ENCODE measurements at regions of chr6 and their contacts with region 1.

Region 1: GRCh38 chr6:161101517-161101916 is 109.9 kb downstream of the MAP3K4 start:
- DNase-seq: no peak
- ATAC-seq: peak; percentile 59; the same call in 1 of the 2 replicates
- H3K4me3 ChIP-seq: no peak overlapping the region
- H3K27ac ChIP-seq: no peak overlapping the region
- H3K4me1 ChIP-seq: no peaks in the 10 kb centered on the region
- H3K27me3 ChIP-seq: no peaks in the 10 kb centered on the region
- CTCF ChIP-seq: peak; percentile 14 to 40 (median 36); a peak in 4 of 6 replicates
- POLR2A ChIP-seq: no peak
- RAD21 ChIP-seq: peak; percentile 51

Region 2: GRCh38 chr6:160733050-160733646 is 368.4 kb before region 1 on chr6:
- CTCF ChIA-PET with region 1: no interaction called
- POLR2A ChIA-PET with region 1: no interaction called
- RAD21 ChIA-PET with region 1: no interaction called
- intact Hi-C with region 1: loop called (anchors 10 kb)
- DNase-seq: peak; percentile 28
- ATAC-seq: peak; percentile 93
- H3K4me3 ChIP-seq: no peak overlapping the region
- H3K27ac ChIP-seq: no peak overlapping the region
- H3K4me1 ChIP-seq: peaks cover 0 to 9% of the 10 kb centered on the region in 2 experiments; a peak in 1 of 4 replicates
- H3K27me3 ChIP-seq: no peaks in the 10 kb centered on the region
- CTCF ChIP-seq: peak; percentile 56 to 79 (median 76); a peak in 5 of 6 replicates
- POLR2A ChIP-seq: no peak
- RAD21 ChIP-seq: peak; percentile 76

Region 3: DNA sequence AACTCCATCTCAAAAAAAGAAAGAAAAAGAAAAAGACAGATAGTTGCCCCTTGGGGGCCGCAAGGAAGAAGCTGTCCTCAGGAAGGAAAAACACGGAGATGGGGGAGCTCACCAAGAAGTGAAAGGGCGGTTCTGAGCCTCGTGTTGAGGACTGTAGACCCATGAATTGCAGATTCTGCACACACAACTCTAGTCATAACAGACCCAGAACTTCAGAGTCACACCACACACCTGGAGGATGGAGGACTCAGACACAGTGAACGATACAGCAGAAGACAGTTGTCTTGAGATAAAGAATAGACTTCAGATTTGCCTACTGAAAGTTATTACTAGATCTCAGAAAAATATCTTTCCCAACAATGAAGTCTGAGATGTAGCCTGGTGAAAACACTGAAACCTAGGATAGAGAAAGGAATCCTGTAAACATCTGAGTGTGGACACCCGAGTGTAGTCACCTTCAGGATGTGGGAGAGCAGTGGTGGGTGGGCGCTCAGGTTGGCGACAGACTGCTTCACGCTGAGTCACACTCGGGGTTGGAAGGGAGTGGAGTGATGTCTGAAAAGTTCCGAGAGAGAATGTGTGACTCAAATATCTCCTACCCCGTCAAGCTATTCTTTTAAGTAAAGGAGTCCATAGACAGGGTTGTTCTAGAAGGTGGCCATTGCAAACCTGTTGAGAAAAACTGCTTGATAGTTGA is 21.8 kb before region 1 on chr6:
- CTCF ChIA-PET with region 1: no interaction called
- POLR2A ChIA-PET with region 1: no interaction called
- RAD21 ChIA-PET with region 1: no interaction called
- intact Hi-C with region 1: no loop called
- DNase-seq: no peak
- ATAC-seq: no peak
- H3K4me3 ChIP-seq: no peak overlapping the region
- H3K27ac ChIP-seq: no peak overlapping the region
- H3K4me1 ChIP-seq: peaks cover 0 to 7% of the 10 kb centered on the region in 2 experiments; a peak in 2 of 4 replicates
- H3K27me3 ChIP-seq: no peaks in the 10 kb centered on the region
- CTCF ChIP-seq: no peak
- POLR2A ChIP-seq: no peak
- RAD21 ChIP-seq: no peak

Measured in HCT116 (cell line).